ENCODE measurements at regions of chr4 and their contacts with region 1.

Region 1: DNA sequence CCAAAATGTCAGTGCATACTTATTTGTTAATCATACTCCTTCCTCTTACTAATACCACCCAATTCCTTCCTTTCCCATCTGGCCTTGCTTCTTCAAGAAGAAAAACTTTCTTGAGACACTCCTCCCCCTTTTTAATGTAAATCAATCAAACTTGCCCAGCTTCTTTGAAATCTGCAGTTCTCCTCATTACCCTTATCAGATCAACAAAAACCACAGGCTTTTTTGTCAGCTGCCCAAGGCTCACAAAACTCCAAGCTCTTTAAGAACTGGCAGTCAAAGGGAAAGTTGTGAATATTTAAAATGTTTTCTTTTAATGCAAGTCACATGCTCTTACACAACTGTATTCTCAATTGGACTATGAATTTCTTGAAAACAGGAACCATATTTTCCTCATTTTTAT is 11.3 kb upstream of the MYOZ2 start:
- DNase-seq: peak in 2 of 3 donors; percentile 13 to 43
- H3K4me3 ChIP-seq: peak overlapping the region in 1 of 3 experiments; percentile 40
- H3K4me3 Mint-ChIP-seq: peak overlapping the region in 1 of 2 donors; percentile 79
- H3K27ac ChIP-seq: peak overlapping the region in 1 of 2 donors; percentile 40
- H3K27ac Mint-ChIP-seq: peak overlapping the region in 6 of 7 donors; percentile 58 to 85 (median 68)
- H3K4me1 ChIP-seq: peaks cover 8 to 13% of the 10 kb centered on the region in 2 donors
- H3K4me1 Mint-ChIP-seq: peaks cover 12% of the 10 kb centered on the region
- H3K27me3 ChIP-seq: no peaks in the 10 kb centered on the region
- H3K27me3 Mint-ChIP-seq: no peaks in the 10 kb centered on the region
- CTCF ChIP-seq: no peak

Region 2: DNA sequence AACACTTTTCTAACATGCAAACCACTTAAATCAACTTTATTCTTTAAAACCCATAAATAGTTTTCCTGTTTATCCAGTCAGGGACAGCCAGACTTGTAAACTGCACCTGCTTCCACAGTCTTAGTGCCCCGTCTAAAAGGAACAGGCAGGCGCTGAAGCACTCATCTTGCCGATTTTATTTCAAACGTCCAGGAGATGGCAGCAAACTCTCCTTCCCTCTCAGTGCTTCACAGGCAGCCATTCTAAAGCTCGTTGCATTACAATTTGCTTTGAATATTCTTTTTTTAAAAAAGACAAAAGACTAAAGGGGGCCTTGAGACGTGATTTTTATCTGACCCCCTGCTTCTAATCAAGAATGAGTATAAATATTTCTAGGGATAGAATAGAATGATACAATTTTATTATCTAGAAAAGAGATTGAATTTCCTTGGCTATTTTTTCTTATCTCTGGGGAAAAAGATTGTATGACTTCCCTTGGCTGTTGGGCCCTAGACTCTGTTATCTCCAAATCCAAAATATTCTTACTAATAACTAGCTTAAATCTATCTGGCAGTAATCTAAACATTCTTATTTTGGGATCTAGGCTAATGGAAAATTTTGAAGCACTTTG is 82.3 kb before region 1 on chr4:
- intact Hi-C with region 1: loop called in 1 of 2 experiments (anchors 10 kb)
- DNase-seq: peak; percentile 54 to 75 (median 71)
- H3K4me3 ChIP-seq: no peak overlapping the region
- H3K4me3 Mint-ChIP-seq: no peak overlapping the region
- H3K27ac ChIP-seq: no peak overlapping the region
- H3K27ac Mint-ChIP-seq: no peak overlapping the region
- H3K4me1 ChIP-seq: peaks cover 15% of the 10 kb centered on the region in 2 donors
- H3K4me1 Mint-ChIP-seq: peaks cover 18% of the 10 kb centered on the region
- H3K27me3 ChIP-seq: no peaks in the 10 kb centered on the region
- H3K27me3 Mint-ChIP-seq: no peaks in the 10 kb centered on the region
- CTCF ChIP-seq: peak; percentile 72